ENCODE measurements at regions of chr7 and their contacts with region 1.

Region 1: DNA sequence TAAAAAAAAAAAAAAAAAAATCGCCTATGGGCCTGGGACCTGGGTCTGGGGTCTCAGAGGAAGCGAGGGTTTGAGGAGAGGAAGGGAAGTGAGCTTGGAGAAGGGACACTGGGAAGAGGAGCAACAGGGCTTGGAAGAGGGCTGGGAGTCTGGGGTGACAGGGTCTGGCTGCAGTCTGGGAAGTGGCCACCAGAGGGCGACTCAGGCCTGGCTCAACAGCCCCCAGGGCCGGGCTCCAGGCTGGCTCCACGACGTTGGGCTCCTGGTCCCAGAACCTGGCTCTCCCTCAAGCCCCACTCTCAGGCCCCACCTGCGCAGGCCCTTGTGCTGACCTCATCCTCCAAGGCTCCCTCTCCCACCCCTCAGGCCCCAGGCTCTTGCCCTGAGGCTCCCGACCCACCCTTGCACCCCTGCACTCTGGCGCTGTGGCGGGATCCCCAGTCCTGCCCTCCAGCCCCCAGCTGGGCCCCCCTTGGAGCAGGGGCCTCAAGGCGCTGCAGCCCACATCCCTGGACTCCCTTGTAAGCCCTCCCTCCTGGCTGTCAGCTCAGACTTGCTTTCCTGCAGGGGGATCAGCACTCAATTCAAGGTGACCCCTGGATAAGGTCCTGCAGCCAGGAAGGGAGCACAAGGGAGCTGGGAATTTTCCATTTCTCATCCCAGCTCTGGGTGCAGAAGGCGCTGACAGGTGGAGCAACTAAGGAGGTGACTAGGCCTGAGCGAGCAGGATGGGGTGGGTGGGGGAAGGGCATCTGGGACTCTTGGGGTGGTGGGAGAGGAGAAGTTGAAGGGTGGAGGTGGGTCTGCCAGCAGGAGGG is 5.4 kb upstream of the SPACDR start:
- DNase-seq: peak; percentile 95

Region 2: GRCh38 chr7:100691676-100692577 is 222.5 kb after region 1 on chr7:
- intact Hi-C with region 1: loop called in 1 of 2 experiments (anchors 5 kb)
- DNase-seq: peak; percentile 94

Region 3: GRCh38 chr7:100719523-100720319 is 250.3 kb after region 1 on chr7:
- intact Hi-C with region 1: loop called in 1 of 2 experiments (anchors 2 kb)
- DNase-seq: no peak

Region 4: GRCh38 chr7:100728196-100728595 is 258.8 kb after region 1 on chr7:
- intact Hi-C with region 1: loop called in 1 of 2 experiments (anchors 2 kb)
- DNase-seq: no peak